Posterior cingulate gyrus (tissue), 11 donors: ENCODE measurements at regions of chr2 and their contacts with region 1.

Region 1: GRCh38 chr2:27428213-27428977 is at the start of gene NRBP1:
- DNase-seq: peak; percentile 89 to 99 (median 95)

Region 2: DNA sequence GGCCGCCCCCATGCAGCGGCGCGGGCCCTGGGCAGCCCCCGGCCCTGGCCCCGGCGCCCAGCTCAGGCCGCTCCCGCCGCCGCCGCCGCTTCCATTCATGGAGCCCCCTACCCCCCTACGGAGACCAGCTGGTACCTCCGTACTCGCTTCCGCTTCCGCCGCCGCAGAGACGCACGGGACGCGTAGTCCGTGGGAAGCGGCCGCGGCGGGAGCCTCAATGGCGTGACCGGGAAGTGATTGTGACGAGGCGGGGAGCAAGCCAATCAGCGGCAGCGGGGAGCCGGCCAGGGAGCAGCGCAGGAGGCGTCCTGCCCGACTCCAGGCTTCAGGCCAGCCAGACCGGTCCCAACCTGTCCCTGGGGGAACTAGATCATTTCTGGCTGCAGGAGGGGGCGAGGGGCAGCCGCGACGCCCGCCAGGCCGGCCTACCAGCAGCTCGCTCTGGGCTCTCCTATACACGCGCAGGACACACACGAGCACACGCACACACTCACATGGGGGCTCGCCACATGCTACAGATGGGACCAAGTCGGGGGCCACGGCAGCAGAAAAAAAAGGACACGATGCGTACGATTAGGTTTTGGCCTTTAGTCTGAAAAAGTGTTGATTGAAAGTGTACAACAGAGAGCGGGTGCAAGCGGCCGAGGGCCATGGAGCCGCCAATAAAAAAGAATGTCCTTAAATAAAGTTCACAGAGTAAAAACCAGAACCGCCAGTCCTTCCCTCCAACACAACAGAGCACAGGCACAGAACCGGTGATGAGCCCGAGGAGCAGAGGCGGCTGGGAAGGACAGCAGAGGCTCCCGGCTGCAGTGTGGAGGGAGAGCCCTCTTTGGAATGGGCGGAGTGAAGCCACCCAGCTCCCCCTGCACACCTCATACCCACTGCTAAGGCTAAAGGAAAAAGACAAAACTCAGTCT is 47.5 kb before region 1 on chr2 and contains the start of gene ZNF513:
- intact Hi-C with region 1: loop called (anchors 5 kb)
- DNase-seq: peak; percentile 97 to 100 (median 98)

Region 3: DNA sequence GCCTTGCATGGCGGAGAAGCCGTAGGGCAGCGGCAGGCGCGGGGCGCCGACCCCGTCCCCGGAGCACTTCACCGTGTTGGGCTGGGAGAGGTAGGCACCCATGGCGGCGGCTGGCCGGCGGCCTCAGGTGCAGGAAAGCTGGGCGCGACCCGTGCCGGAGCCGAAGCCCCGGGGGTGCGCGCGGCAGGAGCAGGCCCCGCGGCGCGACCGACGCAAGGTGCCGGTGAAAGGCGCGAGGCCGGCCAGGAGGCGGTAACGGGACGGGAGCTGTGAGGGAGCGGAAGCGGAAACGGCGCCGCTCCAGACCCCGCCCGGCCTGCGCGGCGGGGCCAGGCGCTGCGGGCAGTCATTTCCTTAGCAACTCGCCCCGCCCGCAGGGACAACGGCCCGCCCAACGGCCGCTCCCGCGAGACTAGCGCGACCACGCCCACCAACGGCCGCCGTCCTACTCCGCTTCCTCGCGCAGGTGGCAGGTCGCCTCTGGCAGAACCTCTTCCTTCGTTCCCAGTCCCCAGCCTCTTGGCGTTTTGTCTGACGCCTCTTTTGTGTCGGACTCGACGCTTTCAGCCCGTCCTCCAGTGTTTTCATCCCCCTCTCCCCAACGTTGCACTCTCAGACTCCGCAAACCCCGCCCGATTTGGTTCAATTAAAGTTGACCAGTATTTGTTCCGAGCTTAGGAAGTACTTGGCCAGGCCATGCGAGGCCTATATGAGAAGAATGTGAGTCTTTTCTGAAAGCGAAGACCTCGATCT is 18.9 kb before region 1 on chr2 and contains the start of gene PPM1G:
- intact Hi-C with region 1: loop called (anchors 1 kb)
- DNase-seq: peak; percentile 93 to 100 (median 97)